Activated CD4-positive, alpha-beta memory T cell treated with anti-CD3 and anti-CD28 coated beads, Interleukin-2, amount 10 ng/mL, durations not matched to agents 7 days and 5 days (primary cell): ENCODE measurements at regions of chr9 and their contacts with region 1.

Region 1: DNA sequence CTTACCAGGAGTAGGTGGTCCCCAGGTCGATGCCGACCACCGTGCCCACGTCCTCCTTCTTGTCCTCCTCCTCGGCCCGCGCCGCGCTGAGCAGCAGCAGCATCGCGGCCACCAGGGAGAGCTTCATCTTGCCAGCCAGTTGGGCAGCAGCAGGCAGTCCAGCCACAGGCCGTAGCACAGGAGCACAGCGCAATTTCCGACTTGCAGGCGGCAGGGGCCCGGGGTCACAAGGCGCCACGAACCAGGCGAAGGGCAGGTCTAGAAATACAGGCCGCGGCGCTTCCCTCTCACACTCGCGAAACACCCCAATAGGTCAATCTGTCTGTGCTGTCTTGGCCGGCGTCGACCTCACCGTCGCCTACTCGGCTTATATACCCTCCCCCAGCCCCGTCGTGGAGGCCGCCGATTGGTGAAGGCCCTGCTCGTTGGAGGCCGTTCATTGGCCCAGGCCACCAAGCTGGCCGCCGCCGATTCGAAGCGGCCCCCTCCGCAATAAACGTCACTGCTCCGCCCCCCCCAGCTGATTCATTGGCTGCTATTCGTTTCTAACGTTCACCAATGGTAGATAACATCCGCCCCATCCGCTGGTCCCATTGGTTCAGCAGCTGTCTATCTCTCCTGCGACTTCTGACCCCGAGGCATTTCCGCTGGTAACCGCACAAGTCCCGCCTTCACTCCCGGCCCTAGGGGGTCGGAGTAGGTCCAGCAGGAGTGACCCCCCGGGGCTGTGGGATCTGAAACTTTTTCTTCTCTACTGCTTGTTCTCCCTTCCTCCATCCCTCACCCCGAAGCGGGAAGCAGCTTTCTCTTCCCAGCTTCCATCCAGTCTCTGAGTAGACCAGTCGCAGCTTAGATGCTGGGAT is at the start of gene HSPA5:
- DNase-seq: peak; percentile 100
- H3K4me3 Mint-ChIP-seq: peak within 1 kb of the TSS; percentile 92
- H3K27ac Mint-ChIP-seq: peak within 1 kb of the TSS; percentile 98
- H3K4me1 Mint-ChIP-seq: peaks cover 48% of the 10 kb centered on the region
- H3K27me3 Mint-ChIP-seq: no peaks in the 10 kb centered on the region
- total RNA-seq, gene HSPA5: 155 to 156 TPM

Region 2: DNA sequence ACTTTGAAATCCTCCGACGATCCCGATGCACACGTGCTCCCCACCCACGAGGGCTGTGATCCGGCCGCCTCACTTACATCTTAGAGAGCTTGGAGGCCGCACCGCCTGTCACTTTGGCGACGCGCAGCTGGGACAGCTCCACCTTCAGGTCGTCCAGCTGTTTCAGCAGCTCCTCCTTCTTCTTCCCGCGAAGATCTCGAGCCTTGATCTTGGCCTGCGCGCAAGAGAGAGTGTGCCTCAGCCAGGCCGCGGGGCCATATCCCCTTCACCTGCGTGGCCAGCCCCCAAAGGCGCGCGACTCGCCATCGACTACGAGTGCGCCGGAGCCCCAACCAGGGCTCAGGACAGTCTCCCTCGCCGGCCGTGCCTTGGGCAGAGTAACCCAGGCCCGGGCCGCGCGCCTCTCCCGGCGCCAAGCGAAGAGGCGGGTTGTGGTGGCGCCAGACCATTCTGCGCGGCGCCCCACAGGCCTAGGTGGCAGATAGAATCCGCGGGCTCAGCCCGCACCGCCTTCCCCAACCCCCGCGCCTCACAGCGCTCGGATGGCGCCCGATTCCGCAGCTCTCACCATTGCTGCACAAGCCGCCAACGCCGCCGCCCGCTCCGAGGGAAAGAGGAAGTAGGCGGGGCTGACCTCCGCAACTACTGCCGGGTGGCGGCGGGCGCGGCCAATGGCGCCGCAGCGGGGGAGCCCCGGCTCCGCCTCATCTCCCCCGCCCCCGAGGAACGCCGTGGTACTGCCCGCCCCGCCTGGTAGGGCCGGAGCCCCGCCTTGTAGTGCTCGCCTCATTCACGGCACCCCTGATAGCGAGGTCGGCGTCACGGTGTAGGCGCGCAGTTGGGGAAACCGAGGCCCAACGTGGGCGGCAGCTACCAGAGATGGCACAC is 379.6 kb before region 1 on chr9 and contains the starts of genes ARPC5L and RPL35:
- CTCF ChIA-PET with region 1: no interaction called
- POLR2A ChIA-PET with region 1: interaction called, 34 read pairs
- DNase-seq: peak; percentile 97
- H3K4me3 Mint-ChIP-seq: peak within 1 kb of the TSS; percentile 86
- H3K27ac Mint-ChIP-seq: peak within 1 kb of the TSS; percentile 96
- H3K4me1 Mint-ChIP-seq: peaks cover 44% of the 10 kb centered on the region
- H3K27me3 Mint-ChIP-seq: no peaks in the 10 kb centered on the region
- total RNA-seq, gene ARPC5L: 76.6 to 79.4 TPM
- total RNA-seq, gene RPL35: 1,297 to 1,317 TPM

Region 3: GRCh38 chr9:125189361-125190289 is 51.6 kb before region 1 on chr9 and contains the start of gene PPP6C:
- CTCF ChIA-PET with region 1: interaction called, 5 read pairs
- POLR2A ChIA-PET with region 1: interaction called, 50 read pairs
- DNase-seq: peak; percentile 98
- H3K4me3 Mint-ChIP-seq: peak within 1 kb of the TSS; percentile 85
- H3K27ac Mint-ChIP-seq: peak within 1 kb of the TSS; percentile 91
- H3K4me1 Mint-ChIP-seq: peaks cover 43% of the 10 kb centered on the region
- H3K27me3 Mint-ChIP-seq: no peaks in the 10 kb centered on the region
- total RNA-seq, gene PPP6C: 56.4 to 57.6 TPM

Region 4: DNA sequence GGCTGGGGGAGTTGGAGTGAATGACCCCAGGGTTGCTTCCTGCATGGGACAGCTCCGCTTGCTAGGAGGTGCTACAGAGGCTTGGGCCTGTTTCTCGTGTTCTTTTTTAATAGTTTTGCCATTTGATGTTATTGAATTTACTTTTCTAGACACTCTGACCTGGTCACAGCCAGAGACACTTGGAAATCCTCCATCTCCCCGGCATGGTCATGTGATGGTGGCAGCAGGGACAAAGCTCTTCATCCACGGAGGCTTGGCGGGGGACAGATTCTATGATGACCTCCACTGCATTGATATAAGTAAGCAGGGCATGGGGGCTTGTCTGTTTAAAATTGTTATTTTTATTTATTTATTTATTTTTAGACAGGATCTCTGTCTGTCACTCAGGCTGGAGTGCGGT is 13.5 kb before region 1 on chr9:
- CTCF ChIA-PET with region 1: interaction called, 3 read pairs
- POLR2A ChIA-PET with region 1: interaction called, 17 read pairs
- DNase-seq: no peak
- H3K4me3 Mint-ChIP-seq: no peak overlapping the region
- H3K27ac Mint-ChIP-seq: no peak overlapping the region
- H3K4me1 Mint-ChIP-seq: no peaks in the 10 kb centered on the region
- H3K27me3 Mint-ChIP-seq: no peaks in the 10 kb centered on the region

Region 5: DNA sequence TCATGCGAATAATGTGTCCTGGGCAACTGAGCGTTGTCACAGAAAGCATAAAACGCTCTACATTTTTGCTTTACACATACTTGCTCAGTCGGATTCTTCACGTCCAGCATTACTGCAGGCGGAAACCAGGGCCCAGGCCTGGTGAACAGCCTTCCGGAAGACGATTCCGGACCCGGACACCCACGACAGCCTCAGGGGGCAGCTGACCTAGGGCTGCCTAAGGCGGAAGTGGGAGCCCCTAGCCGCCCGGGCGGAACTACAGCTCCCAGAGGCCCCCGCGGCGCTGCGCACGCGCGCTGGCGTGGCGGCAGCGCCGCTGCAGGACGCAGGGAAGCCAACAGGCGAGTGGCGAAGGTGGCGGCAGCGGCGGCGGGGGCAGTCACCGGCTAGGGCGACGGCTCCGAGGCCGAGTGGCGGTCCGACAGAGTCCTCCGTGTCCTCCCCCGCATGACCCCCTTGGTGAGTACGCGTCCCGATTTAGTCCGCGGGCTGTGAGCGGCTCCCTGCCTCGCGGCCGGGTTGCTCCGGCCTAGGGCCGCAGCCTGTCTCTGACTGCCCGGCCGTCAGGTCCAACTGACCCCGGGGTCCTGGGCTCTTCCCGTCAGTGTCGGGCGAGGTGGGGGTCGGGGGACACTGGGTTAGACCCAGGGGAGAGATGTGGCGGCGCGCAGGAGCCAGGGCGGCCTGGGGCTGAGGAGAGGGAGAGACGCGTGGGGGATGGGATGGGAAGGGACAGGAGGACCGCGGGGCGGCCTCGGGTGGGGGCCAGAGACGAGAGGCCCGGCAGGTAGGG is 20.5 kb after region 1 on chr9 and contains the start of gene GAPVD1:
- CTCF ChIA-PET with region 1: interaction called, 26 read pairs
- POLR2A ChIA-PET with region 1: interaction called, 112 read pairs
- DNase-seq: peak; percentile 92
- H3K4me3 Mint-ChIP-seq: peak within 1 kb of the TSS; percentile 91
- H3K27ac Mint-ChIP-seq: peak within 1 kb of the TSS; percentile 86
- H3K4me1 Mint-ChIP-seq: peaks cover 42% of the 10 kb centered on the region
- H3K27me3 Mint-ChIP-seq: peaks cover 2% of the 10 kb centered on the region
- total RNA-seq, gene GAPVD1: 47.7 to 49.6 TPM

Region 6: DNA sequence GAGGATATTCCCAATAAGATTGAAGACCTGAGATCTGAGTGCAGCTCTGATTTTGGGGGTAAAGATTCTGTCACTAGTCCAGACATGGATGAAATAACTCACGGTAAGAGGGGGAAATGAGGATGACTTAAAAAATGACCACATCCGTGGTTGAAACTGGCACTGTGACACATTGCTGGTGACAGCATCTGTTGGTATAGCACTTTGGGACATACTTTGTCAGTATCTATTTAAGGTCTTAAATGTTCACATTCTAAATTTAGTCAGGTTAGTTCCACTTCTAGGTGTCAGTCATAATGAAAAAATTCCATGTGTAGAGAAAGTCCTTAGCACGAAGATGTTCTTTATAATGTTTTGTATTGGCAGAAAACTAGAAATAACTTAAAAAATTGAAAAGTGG is 91.3 kb after region 1 on chr9:
- CTCF ChIA-PET with region 1: no interaction called
- POLR2A ChIA-PET with region 1: interaction called, 10 read pairs
- DNase-seq: peak; percentile 33
- H3K4me3 Mint-ChIP-seq: no peak overlapping the region
- H3K27ac Mint-ChIP-seq: peak overlapping the region; percentile 16
- H3K4me1 Mint-ChIP-seq: peaks cover 16% of the 10 kb centered on the region
- H3K27me3 Mint-ChIP-seq: no peaks in the 10 kb centered on the region